ENCODE measurements at regions of chr16 and their contacts with region 1.

Region 1: DNA sequence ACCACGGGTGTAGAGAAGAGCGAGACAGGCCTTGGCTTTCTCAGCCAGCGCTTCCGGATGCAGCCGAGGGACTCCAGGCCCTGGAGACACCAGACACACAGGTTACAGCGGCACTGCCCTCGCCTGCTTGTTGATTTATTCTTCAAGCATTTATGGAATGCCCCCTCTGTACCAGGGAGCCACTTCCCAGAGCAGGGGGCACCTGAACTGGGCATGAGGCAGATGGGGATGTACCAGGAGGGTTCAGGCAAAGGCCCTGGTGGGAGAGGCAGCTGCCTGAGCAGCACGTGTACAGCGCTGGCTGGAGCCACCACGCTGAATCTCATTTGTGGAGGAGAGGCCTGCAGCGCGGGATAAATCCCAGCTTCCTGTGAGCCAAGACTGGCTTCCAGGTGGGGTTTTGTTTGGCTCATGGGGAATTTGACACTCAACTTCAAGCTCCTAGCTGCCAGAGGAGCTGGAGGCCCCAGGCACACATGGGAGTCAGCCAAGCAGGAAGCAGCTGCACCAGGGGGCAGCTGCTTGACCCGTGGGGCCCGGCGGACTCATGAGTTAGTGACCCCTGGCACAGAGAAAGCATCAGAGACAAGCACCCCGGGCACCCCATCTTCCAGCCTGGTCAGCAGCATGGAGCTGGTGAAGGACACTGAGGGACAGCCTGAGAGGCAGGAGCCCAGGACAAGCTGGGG is 59.7 kb downstream of the IL21R start:
- DNase-seq: no peak
- H3K4me3 Mint-ChIP-seq: no peak overlapping the region
- H3K27ac Mint-ChIP-seq: no peak overlapping the region
- H3K4me1 Mint-ChIP-seq: no peaks in the 10 kb centered on the region
- H3K27me3 Mint-ChIP-seq: no peaks in the 10 kb centered on the region
- CTCF ChIP-seq: no peak

Region 2: DNA sequence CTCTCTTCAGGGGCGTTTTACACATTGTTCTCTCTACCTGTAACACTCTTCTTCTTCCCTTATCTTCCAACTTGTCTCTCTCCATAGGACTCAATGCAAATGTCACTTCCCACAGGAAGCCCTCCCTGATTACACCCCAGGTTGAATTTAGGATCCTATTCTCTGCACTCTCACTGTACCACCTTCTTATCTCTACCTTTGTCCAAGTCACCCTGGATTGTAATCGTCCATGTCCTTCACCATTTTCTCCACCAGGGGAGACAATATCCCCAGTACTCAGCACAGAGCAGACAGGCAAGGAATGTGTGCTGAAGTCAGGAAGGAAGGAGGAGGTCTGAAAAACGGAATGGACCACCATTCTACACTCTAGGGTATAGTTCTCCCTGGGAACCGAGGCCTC is 380.8 kb before region 1 on chr16:
- CTCF ChIA-PET with region 1: no interaction called
- intact Hi-C with region 1: loop called (anchors 1 kb)
- DNase-seq: peak; percentile 13
- H3K4me3 Mint-ChIP-seq: no peak overlapping the region
- H3K27ac Mint-ChIP-seq: no peak overlapping the region
- H3K4me1 Mint-ChIP-seq: no peaks in the 10 kb centered on the region
- H3K27me3 Mint-ChIP-seq: peaks cover 91% of the 10 kb centered on the region
- CTCF ChIP-seq: peak; percentile 49

Region 3: DNA sequence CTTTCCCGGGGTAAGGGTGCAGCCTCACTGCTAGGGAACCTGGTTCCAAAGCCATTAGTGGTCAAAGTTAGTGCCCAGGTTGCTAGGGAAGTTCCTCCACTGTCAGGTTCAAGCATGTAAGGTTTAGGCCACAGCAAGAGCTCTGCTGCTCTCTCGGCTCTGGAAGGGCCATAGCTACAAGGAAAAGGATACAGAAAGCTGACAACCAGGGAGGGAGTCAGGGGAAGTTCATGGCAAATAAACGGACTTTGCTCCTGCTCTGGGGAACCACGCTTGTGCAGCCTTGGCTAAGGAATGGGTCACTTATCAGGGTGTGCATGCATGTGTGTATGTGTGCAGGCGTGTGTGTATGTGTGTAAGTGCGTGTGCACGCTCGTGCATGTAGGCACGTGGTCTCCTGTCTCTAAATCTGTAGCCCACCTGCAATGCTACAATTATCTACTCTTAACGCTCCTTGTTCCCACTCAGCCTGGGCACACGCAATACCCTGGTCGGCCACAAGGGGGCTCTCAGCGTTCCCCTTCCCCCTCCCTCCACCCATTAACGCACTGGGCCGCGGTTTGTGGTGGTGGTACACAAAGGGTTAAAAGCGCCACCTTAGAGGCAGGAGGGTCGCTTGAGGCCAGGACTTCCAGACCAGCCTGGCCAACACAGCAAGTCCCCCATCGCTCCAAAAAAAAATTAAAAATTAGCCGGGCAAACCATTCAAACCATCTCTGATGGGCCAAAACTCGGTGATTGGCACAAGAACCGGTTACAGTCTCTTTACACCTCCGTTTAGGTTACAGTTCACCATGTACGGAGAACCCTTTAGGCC is 306.7 kb before region 1 on chr16:
- CTCF ChIA-PET with region 1: no interaction called
- intact Hi-C with region 1: loop called (anchors 1 kb)
- DNase-seq: peak; percentile 74
- H3K4me3 Mint-ChIP-seq: no peak overlapping the region
- H3K27ac Mint-ChIP-seq: no peak overlapping the region
- H3K4me1 Mint-ChIP-seq: peaks cover 12% of the 10 kb centered on the region
- H3K27me3 Mint-ChIP-seq: peaks cover 71% of the 10 kb centered on the region
- CTCF ChIP-seq: peak; percentile 99

Region 4: GRCh38 chr16:27203429-27204231 is 258.0 kb before region 1 on chr16 and contains the start of gene KDM8:
- CTCF ChIA-PET with region 1: no interaction called
- intact Hi-C with region 1: no loop called
- DNase-seq: peak; percentile 99
- H3K4me3 Mint-ChIP-seq: peak within 1 kb of the TSS; percentile 77
- H3K27ac Mint-ChIP-seq: peak within 1 kb of the TSS; percentile 83
- H3K4me1 Mint-ChIP-seq: peaks cover 8% of the 10 kb centered on the region
- H3K27me3 Mint-ChIP-seq: peaks cover 5% of the 10 kb centered on the region
- CTCF ChIP-seq: no peak
- total RNA-seq, gene KDM8: 8.4 and 10.2 TPM in 2 replicates

Region 5: DNA sequence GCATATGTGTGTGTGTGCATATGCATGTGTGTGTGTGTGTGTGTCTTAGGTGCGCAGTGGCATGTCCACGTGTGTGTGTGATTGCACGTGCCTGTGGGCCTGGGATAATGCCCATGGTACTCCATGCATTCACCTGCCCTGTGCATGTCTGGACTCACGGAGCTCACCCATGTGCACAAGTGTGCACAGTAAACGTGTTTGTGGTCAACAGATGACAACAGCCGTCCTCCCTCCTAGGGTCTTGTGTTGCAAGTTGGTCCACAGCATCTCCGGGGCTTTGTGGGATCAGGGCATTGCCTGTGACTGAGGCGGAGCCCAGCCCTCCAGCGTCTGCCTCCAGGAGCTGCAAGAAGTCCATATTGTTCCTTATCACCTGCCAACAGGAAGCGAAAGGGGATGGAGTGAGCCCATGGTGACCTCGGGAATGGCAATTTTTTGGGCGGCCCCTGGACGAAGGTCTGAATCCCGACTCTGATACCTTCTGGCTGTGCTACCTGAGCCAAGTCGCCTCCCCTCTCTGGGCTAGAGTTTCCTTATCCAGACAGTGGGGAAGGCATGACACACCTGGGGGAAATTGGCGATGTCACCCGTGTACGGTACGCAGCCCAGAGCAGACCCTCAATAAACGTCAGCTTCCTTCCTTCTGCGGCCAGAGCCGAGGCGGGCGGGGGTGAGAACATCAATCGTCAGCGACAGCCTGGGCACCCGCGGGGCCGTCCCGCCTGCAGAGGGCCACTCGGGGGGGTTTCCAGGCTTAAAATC is 12.0 kb before region 1 on chr16:
- CTCF ChIA-PET with region 1: no interaction called
- intact Hi-C with region 1: no loop called
- DNase-seq: no peak
- H3K4me3 Mint-ChIP-seq: no peak overlapping the region
- H3K27ac Mint-ChIP-seq: no peak overlapping the region
- H3K4me1 Mint-ChIP-seq: no peaks in the 10 kb centered on the region
- H3K27me3 Mint-ChIP-seq: peaks cover 75% of the 10 kb centered on the region
- CTCF ChIP-seq: no peak

Region 6: DNA sequence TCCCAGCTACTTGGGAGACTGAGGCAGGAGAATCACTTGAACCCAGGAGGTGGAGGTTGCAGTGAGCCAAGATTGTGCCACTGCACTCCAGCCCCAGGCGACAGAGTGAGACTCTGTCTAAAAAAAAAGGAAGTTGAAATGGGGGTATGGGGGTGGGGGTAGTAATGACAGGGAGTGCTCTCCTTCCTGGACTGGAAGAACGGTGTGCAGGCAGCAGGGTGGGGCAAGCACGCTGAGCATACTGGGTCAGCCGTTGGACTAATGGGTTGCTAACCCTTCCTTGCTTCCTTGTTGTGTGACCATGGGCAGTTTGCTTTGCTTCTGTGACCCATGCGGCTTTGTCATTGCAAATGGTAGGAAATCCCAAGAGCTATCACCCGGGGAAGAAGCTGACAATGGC is 104.8 kb after region 1 on chr16:
- CTCF ChIA-PET with region 1: no interaction called
- intact Hi-C with region 1: no loop called
- DNase-seq: no peak
- H3K4me3 Mint-ChIP-seq: no peak overlapping the region
- H3K27ac Mint-ChIP-seq: no peak overlapping the region
- H3K4me1 Mint-ChIP-seq: no peaks in the 10 kb centered on the region
- H3K27me3 Mint-ChIP-seq: no peaks in the 10 kb centered on the region
- CTCF ChIP-seq: no peak